OCI-LY7 (cell line): ENCODE measurements at regions of chr17 and their contacts with region 1.

Region 1: GRCh38 chr17:69501591-69502468 is 87.3 kb downstream of the MAP2K6 start:
- DNase-seq: peak; percentile 61
- H3K4me3 ChIP-seq: peak overlapping the region; percentile 50
- H3K27ac ChIP-seq: peak overlapping the region; percentile 67
- H3K4me1 ChIP-seq: peaks cover 55% of the 10 kb centered on the region
- CTCF ChIP-seq: no peak

Region 2: GRCh38 chr17:69327060-69327831 is 174.6 kb before region 1 on chr17 and contains the start of gene ABCA5:
- CTCF ChIA-PET with region 1: no interaction called
- POLR2A ChIA-PET with region 1: interaction called, 8 read pairs
- intact Hi-C with region 1: loop called (anchors 5 kb)
- DNase-seq: peak; percentile 98
- H3K4me3 ChIP-seq: peak within 1 kb of the TSS; percentile 73
- H3K27ac ChIP-seq: no peak within 1 kb of the TSS
- H3K4me1 ChIP-seq: peaks cover 16% of the 10 kb centered on the region
- CTCF ChIP-seq: no peak
- total RNA-seq, gene ABCA5: 14.7 and 15.1 TPM in 2 replicates

Region 3: GRCh38 chr17:69423450-69423849 is 78.4 kb before region 1 on chr17:
- CTCF ChIA-PET with region 1: no interaction called
- POLR2A ChIA-PET with region 1: interaction called, 10 read pairs
- intact Hi-C with region 1: no loop called
- DNase-seq: no peak
- H3K4me3 ChIP-seq: no peak overlapping the region
- H3K27ac ChIP-seq: no peak overlapping the region
- H3K4me1 ChIP-seq: peaks cover 11% of the 10 kb centered on the region
- CTCF ChIP-seq: no peak

Region 4: DNA sequence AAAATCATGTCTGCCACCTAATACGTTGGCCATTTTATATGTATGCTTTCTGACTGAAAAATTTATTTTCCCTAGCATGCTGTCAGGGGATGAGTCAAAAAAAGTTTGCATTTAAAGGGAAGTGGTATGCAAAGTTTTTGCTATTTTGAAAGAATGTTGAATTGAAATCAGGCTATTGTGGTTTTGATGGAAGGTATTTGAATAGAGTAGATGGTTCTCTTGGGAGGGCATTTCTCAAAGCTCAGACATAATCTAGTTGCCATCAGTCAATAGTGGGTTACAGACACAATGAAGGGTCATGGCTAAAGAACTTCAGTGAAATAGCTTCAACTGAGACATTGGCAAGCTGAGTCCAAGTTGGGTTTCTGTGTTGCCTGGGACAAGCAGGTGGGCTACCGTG is 15.1 kb after region 1 on chr17:
- CTCF ChIA-PET with region 1: interaction called, 5 read pairs
- POLR2A ChIA-PET with region 1: interaction called, 37 read pairs
- intact Hi-C with region 1: no loop called
- DNase-seq: peak; percentile 61
- H3K4me3 ChIP-seq: peak overlapping the region; percentile 38
- H3K27ac ChIP-seq: peak overlapping the region; percentile 39
- H3K4me1 ChIP-seq: peaks cover 22% of the 10 kb centered on the region
- CTCF ChIP-seq: no peak

Region 5: GRCh38 chr17:69567130-69567529 is 65.3 kb after region 1 on chr17:
- CTCF ChIA-PET with region 1: no interaction called
- POLR2A ChIA-PET with region 1: no interaction called
- intact Hi-C with region 1: no loop called
- DNase-seq: no peak
- H3K4me3 ChIP-seq: no peak overlapping the region
- H3K27ac ChIP-seq: no peak overlapping the region
- H3K4me1 ChIP-seq: peaks cover 34% of the 10 kb centered on the region
- CTCF ChIP-seq: no peak